Activated CD4-positive, alpha-beta T cell treated with anti-CD3 and anti-CD28 coated beads for 36 hours (primary cell): ENCODE measurements at regions of chr16 and their contacts with region 1.

Region 1: DNA sequence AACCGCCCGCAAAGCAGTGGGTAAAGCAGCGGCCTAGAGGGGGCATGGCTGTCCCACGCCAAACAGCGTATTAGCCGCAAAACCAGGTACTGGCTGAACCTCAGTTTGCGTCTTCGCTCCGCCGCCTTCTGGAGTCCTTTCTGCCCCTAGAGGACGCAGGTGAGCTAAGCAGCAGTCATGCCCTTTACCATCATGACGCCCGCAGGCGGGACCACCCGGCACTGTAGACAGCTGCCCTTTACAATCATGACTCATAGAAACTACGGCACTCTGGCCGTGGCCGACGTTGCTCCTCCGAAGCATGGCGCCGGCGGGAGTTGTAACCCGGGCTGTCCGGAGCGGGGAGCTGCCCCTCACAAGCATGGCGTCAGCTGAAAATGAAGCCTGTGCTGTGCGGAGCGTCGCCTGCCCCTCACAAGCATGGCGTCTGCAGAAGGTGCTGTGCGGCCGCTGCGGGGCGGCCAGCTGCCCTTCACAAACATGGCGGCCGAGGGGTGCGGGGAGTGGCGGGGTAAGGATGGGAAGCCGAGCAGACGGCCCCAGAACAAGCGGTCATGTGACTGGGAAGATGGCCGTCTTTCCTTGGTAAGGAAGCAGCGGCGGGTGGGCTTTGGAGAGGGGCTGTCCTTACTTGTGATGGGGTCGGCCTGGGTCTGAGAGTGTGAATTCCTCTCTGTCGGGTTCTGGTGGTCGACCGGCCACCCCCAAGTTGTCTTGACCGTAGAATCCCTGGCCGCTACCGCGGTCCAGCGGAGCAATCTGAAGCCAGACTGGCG is at the start of gene VPS35L:
- DNase-seq: peak; percentile 96
- ATAC-seq: peak; percentile 97
- H3K4me3 Mint-ChIP-seq: peak within 1 kb of the TSS; percentile 86
- H3K27ac Mint-ChIP-seq: peak within 1 kb of the TSS; percentile 87
- H3K4me1 Mint-ChIP-seq: peaks cover 20% of the 10 kb centered on the region
- H3K27me3 Mint-ChIP-seq: no peaks in the 10 kb centered on the region
- total RNA-seq, gene VPS35L: 30.7 to 31.6 TPM

Region 2: DNA sequence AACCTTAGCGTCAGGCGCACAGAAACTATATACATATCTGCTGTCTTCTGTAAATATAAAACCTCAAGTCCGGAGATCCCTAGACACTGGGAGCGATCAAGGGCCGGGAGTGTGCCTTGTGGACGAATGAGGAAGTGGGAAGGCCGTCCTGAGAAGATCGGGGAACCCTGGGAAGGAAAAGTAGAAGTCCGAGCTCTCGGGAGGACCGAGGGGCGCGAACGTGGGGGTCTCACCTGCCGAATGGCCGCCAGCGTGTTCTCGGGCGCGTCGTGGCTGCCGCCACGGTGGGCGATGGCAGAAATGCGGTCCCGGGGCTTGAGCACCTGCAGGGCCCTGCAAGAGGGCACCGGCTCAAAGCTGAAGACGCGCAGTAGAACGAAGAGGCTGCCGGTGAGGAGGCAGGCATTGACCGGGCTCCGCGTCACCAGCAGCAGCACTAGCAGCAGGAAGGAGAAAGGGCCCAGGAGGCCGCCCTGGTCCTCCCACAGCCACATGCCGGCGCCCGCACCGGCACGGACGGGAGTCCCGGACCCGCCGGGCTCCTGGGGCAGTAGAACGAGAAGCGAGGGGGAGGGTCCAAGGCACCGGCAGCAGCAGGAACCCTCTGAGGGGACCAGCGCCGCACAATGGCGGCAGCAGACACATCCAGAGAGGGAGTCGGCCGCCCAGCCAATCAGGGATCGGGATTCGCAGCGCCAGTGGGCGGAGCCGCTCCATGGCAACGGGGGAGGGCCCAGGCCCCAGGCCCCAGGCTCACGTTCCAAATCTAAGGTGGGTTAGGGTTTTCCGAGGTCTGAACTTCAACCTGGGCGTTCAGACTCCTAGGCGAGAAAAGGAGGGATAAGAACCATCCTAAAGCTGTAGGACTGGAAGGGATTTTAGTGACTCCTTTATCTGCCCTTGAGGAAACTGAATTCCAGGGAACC is 33.6 kb before region 1 on chr16 and contains the start of gene GDE1:
- CTCF ChIA-PET with region 1: interaction called, 15 read pairs
- POLR2A ChIA-PET with region 1: interaction called, 27 read pairs
- intact Hi-C with region 1: loop called (anchors 1 kb)
- DNase-seq: peak; percentile 97
- ATAC-seq: peak; percentile 83
- H3K4me3 Mint-ChIP-seq: peak within 1 kb of the TSS; percentile 94
- H3K27ac Mint-ChIP-seq: peak within 1 kb of the TSS; percentile 90
- H3K4me1 Mint-ChIP-seq: peaks cover 45% of the 10 kb centered on the region
- H3K27me3 Mint-ChIP-seq: no peaks in the 10 kb centered on the region
- total RNA-seq, gene GDE1: 13.8 to 18.1 TPM

Region 3: GRCh38 chr16:19542138-19542821 is 13.1 kb before region 1 on chr16:
- CTCF ChIA-PET with region 1: interaction called, 13 read pairs
- POLR2A ChIA-PET with region 1: no interaction called
- intact Hi-C with region 1: no loop called
- DNase-seq: no peak
- ATAC-seq: no peak
- H3K4me3 Mint-ChIP-seq: no peak overlapping the region
- H3K27ac Mint-ChIP-seq: no peak overlapping the region
- H3K4me1 Mint-ChIP-seq: no peaks in the 10 kb centered on the region
- H3K27me3 Mint-ChIP-seq: no peaks in the 10 kb centered on the region